PC-3 (cell line): ENCODE measurements at regions of chr11 and their contacts with region 1.

Region 1: GRCh38 chr11:74170694-74171629 is at the starts of genes C2CD3 and PPME1:
- DNase-seq: peak; percentile 100
- ATAC-seq: peak; percentile 96
- H3K4me3 ChIP-seq: peak within 1 kb of the TSS; percentile 87
- H3K27ac ChIP-seq: peak within 1 kb of the TSS; percentile 68
- H3K4me1 ChIP-seq: peaks cover 38% of the 10 kb centered on the region
- H3K27me3 ChIP-seq: no peaks in the 10 kb centered on the region
- CTCF ChIP-seq: peak; percentile 46
- total RNA-seq, gene C2CD3: 27.3 and 32.6 TPM in 2 replicates
- total RNA-seq, gene PPME1: 48.4 and 66.2 TPM in 2 replicates

Region 2: DNA sequence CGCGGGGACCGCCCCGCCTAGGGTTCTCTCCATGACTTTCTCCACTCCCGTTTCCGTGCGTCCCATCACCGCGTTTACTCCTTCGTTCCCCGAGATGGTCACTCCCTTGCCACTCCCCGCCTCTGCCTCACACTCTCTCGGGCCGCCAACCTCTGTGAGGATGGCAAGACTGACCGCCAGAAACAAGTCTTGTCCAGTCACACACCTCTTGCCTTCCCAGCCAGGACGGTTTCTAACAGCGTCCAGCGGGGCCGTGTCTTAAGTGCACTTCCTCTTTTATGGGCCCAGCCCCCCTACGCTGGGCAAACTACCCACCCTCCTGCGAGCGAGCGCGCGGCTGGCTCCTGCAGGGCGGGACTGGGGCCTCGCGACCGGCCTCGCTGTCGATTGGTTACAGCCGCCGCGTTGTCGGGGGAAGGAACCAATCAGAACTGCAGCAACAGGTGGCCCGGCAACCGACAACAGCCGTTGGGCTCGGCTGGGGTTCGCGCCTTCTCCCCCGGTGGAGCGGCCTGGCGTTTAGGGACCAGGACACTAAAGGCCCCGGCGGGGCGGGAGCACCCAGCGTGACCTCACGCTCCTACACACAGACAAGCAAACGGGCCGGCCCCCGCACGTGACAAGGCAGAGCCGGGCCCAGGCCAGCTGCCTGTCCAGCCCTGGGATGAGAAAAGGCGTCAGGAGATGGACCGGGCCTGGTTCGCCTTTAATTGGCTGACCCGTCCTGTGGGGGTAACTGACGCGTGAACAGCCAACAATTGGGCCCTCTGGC is 187.8 kb before region 1 on chr11:
- CTCF ChIA-PET with region 1: interaction called, 16 read pairs
- POLR2A ChIA-PET with region 1: interaction called, 5 read pairs
- intact Hi-C with region 1: loop called (anchors 10 kb)
- DNase-seq: peak; percentile 92
- ATAC-seq: peak; percentile 90
- H3K4me3 ChIP-seq: peak overlapping the region; percentile 79
- H3K27ac ChIP-seq: peak overlapping the region; percentile 85
- H3K4me1 ChIP-seq: peaks cover 28% of the 10 kb centered on the region
- H3K27me3 ChIP-seq: no peaks in the 10 kb centered on the region
- CTCF ChIP-seq: no peak

Region 3: GRCh38 chr11:73995247-73995646 is 175.7 kb before region 1 on chr11:
- CTCF ChIA-PET with region 1: no interaction called
- POLR2A ChIA-PET with region 1: no interaction called
- intact Hi-C with region 1: no loop called
- DNase-seq: no peak
- ATAC-seq: no peak
- H3K4me3 ChIP-seq: no peak overlapping the region
- H3K27ac ChIP-seq: no peak overlapping the region
- H3K4me1 ChIP-seq: peaks cover 14% of the 10 kb centered on the region
- H3K27me3 ChIP-seq: no peaks in the 10 kb centered on the region
- CTCF ChIP-seq: no peak

Region 4: DNA sequence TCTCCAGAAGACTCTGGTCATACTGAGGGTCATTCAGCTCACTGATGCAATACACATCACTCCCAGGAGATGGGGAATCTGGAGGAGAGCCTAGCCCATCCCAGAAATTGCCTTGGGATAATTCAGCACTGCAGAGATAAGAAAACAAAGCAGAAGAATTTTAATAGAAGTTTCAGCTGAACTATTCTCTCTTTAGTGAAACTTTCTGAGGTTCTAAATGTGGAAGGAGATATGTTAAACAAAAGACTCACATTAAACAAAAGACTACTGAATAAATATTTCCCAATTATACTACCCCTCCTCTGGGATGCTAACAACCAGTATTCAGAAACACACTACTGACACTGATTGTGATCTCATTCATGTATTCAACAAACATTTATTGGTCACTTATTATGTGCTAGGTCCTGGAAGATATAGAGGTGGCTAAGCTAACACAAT is 47.9 kb before region 1 on chr11:
- CTCF ChIA-PET with region 1: interaction called, 3 read pairs
- POLR2A ChIA-PET with region 1: interaction called, 12 read pairs
- intact Hi-C with region 1: loop called (anchors 2 kb)
- DNase-seq: peak; percentile 16
- ATAC-seq: peak; percentile 66
- H3K4me3 ChIP-seq: no peak overlapping the region
- H3K27ac ChIP-seq: no peak overlapping the region
- H3K4me1 ChIP-seq: no peaks in the 10 kb centered on the region
- H3K27me3 ChIP-seq: no peaks in the 10 kb centered on the region
- CTCF ChIP-seq: peak; percentile 19; the same call in 1 of the 2 replicates

Region 5: DNA sequence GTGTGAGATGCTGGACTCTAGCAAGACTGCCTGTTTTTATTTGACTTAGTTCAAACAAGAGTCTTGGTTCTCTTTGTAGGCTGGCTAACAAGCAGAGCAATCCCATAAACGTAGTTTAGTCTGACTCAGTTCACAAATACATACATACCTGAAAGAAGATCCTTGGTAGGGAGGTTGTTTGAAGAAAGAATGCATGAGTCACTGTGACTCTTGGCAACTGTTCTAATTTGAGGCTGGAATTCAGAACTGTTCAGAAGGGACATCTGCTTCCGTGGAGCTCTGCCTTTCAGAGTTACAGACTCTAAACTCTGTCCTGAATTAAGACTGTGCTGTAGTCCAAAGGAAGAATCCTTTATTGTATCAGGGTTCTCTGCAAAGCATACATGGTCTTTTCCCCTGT is 32.4 kb before region 1 on chr11:
- CTCF ChIA-PET with region 1: no interaction called
- POLR2A ChIA-PET with region 1: interaction called, 4 read pairs
- intact Hi-C with region 1: loop called (anchors 1 kb)
- DNase-seq: peak; percentile 100
- ATAC-seq: peak; percentile 90
- H3K4me3 ChIP-seq: peak overlapping the region; percentile 47
- H3K27ac ChIP-seq: peak overlapping the region; percentile 91
- H3K4me1 ChIP-seq: peaks cover 65% of the 10 kb centered on the region
- H3K27me3 ChIP-seq: no peaks in the 10 kb centered on the region
- CTCF ChIP-seq: no peak

Region 6: DNA sequence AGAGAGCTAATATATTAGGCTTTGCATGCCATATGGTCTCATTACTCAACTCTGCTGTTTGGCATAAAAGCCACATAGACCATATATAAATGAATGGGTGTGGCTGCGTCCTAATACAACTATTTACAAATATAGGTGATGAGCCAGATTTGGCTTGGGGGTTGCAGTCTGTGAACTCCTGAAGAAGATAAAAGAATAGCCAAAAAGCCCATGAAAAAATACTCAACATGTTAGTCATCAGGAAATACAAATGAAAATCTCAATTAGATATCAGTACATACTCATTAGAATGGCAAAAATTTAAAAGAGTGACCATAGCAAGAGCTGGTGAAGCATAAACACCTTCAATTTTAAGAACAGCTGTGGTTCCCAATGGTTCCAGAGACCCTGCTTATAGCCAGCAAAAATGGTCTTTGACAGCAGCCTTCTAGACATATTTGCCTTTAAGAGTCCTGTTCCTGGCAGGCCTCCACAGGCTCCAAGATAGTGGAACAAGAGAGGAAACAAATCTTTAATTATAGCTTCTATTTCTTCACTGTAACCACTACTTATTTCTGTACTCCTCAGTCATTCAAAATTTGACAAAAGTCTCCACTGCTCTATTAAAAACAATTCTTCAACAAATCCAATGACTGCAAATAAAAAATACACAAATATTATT is 16.2 kb before region 1 on chr11:
- CTCF ChIA-PET with region 1: interaction called, 3 read pairs
- POLR2A ChIA-PET with region 1: interaction called, 3 read pairs
- intact Hi-C with region 1: loop called (anchors 2 kb)
- DNase-seq: peak; percentile 98
- ATAC-seq: peak; percentile 84
- H3K4me3 ChIP-seq: peak overlapping the region; percentile 15; the same call in 1 of the 2 replicates
- H3K27ac ChIP-seq: peak overlapping the region; percentile 86
- H3K4me1 ChIP-seq: peaks cover 40% of the 10 kb centered on the region
- H3K27me3 ChIP-seq: no peaks in the 10 kb centered on the region
- CTCF ChIP-seq: no peak

Region 7: DNA sequence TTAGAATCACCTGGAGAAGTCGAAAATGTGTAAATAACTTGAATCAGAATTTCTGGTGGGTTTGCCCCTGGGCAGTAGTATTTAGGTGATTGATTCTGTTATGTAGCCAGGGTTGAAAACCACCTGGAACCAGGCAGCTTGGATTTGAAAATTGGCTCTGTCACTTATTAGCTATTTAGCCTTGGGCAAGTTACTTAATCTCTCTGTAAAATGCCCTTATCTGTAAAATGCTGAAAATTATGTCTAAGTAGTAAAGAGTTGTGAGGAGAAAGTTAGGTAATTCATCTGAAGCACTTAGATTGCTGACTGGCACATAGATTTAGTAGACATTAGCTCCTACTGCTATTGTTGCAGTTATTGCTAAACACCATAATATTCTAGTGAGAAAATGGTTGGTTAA is 49.4 kb after region 1 on chr11:
- CTCF ChIA-PET with region 1: no interaction called
- POLR2A ChIA-PET with region 1: interaction called, 15 read pairs
- intact Hi-C with region 1: no loop called
- DNase-seq: no peak
- ATAC-seq: no peak
- H3K4me3 ChIP-seq: no peak overlapping the region
- H3K27ac ChIP-seq: no peak overlapping the region
- H3K4me1 ChIP-seq: no peaks in the 10 kb centered on the region
- H3K27me3 ChIP-seq: no peaks in the 10 kb centered on the region
- CTCF ChIP-seq: no peak